ENCODE measurements at regions of chr12 and their contacts with region 1.

Region 1: DNA sequence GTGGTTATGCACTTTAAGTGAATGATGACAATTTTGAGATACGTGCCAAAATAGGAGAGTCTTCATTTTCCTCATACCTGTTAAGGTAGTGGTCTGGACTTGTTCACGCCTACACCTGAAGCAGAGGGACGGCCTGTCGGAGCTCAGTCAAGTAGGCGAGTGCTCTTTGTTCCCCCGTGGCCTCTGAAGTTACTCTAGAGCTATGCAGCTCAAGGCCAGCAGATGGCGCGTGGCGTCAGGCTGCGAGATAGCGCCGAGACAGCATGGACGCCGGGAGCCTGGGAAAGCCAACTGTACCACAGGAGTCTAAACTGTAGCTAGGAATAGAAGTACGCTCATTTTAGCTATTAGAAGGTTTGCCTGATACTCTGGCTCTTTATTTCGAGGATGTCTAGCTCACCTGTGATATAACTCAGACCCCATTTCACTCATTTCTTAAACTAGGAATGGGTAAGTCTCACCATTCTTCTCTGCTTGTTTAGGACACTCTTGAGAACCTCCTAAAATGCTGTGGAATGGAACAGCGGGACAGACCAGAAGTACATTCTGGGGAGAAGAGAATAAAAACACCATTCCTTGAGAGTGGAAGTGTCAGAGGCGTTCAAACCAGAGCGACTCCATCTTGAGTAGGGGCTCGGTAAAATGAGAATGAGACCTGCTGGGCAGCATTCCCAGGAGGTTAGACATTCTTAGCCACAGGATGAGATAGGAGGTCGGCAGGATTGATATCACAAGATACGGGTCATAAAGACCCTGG is 267.4 kb upstream of the HMGA2 start:
- DNase-seq: peak; percentile 78
- ATAC-seq: peak; percentile 93
- H3K4me3 Mint-ChIP-seq: no peak overlapping the region
- H3K27ac Mint-ChIP-seq: no peak overlapping the region
- H3K4me1 Mint-ChIP-seq: no peaks in the 10 kb centered on the region
- H3K27me3 Mint-ChIP-seq: peaks cover 10% of the 10 kb centered on the region
- CTCF ChIP-seq: peak; percentile 87

Region 2: GRCh38 chr12:65685514-65685913 is 128.7 kb after region 1 on chr12:
- CTCF ChIA-PET with region 1: no interaction called
- POLR2A ChIA-PET with region 1: no interaction called
- intact Hi-C with region 1: loop called (anchors 5 kb)
- DNase-seq: no peak
- ATAC-seq: no peak
- H3K4me3 Mint-ChIP-seq: no peak overlapping the region
- H3K27ac Mint-ChIP-seq: no peak overlapping the region
- H3K4me1 Mint-ChIP-seq: no peaks in the 10 kb centered on the region
- H3K27me3 Mint-ChIP-seq: peaks cover 2% of the 10 kb centered on the region
- CTCF ChIP-seq: peak; percentile 52

Region 3: GRCh38 chr12:66087365-66087943 is 530.6 kb after region 1 on chr12:
- CTCF ChIA-PET with region 1: interaction called, 9 read pairs
- POLR2A ChIA-PET with region 1: no interaction called
- intact Hi-C with region 1: loop called (anchors 2 kb)
- DNase-seq: peak; percentile 79
- ATAC-seq: peak; percentile 45
- H3K4me3 Mint-ChIP-seq: no peak overlapping the region
- H3K27ac Mint-ChIP-seq: no peak overlapping the region
- H3K4me1 Mint-ChIP-seq: no peaks in the 10 kb centered on the region
- H3K27me3 Mint-ChIP-seq: peaks cover 17% of the 10 kb centered on the region
- CTCF ChIP-seq: peak; percentile 61